Left ventricle myocardium superior (tissue), 1 donor: ENCODE measurements at regions of chr5 and their contacts with region 1.

Region 1: GRCh38 chr5:32489791-32490582 is 45.4 kb upstream of the ZFR start:
- DNase-seq: peak; percentile 88
- ATAC-seq: peak; percentile 82

Region 2: GRCh38 chr5:32589942-32590869 is 100.2 kb after region 1 on chr5:
- intact Hi-C with region 1: loop called (anchors 5 kb)
- DNase-seq: no peak
- ATAC-seq: no peak

Region 3: DNA sequence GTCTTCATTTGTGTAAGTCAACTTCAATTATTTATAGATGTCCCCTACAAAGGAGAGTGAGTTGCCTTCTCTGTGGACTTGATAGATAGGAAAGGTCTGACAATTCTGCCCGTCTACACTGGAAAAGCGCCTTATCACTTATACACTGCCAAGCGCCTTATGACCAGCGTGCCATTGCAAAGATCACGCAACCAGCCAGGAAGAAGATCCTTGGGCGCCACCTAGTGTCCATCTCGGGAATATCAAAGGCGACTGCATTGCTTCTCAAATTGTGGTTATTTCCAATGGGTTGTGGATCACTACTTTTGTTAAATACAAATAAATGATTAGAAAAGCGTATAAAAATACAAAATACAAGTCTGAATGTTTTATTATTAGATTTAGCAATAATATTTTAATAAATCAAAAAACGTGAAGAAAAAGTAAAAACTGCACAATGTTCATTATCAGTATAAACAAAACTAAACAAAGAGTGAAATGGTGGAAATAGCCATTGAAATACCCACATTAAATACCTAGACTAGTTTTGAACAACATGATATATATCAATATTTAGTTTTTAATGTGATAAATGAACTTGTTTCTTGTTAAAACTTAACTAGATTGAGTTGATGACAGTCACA is 123.2 kb after region 1 on chr5:
- intact Hi-C with region 1: loop called (anchors 2 kb)
- DNase-seq: peak; percentile 84
- ATAC-seq: peak; percentile 65